Posterior cingulate gyrus (tissue), 11 donors: ENCODE measurements at regions of chr2 and their contacts with region 1.

Region 1: GRCh38 chr2:6896930-6897759 is 19.6 kb downstream of the RSAD2 start:
- DNase-seq: no peak

Region 2: GRCh38 chr2:6089474-6089873 is 807.7 kb before region 1 on chr2:
- intact Hi-C with region 1: no loop called
- DNase-seq: no peak

Region 3: DNA sequence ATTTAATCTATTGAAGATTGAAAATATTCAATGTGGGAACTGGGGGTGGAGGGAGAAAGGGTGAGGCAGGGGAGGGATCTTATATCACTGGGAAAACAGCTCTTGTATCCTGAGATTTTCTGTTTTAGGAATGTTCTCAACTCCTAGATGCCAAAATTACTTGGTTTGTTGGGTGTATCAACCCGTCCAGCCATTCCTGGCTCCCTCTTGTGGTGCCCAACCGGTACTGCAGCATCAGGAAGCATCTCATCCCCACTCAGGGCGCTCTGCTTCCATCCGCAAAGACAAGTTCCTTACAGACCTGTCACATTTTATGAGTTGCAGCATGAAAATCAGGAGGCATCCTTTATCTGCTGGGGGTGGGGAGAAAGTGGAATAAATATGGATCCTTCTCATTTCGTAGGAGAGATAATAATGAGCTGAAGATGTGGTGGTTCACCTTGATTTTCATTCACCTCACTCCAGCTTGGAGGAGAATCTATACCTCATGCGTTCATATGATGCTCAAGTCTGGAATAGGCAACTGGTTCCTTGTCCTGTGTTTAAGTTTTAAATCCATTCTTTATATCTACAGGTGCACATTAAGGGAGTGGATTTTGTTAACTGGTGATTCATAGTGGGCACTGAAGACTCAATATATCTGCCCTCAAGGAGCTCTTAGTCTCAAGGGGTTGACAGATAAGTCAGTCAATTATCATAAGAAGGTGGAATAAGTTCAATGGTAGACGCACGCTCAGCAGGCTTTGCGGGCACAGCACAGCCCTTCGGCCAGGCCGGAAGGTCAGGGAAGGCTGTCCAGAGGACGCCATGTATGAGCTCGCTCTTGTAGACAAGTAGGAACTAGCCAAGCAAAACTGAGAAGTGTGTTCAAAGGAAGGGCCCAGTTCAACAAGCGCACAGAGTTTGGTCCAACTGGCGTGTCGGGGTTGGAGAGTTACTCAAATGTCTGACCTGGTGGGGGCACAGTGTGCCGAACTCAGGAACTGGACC is 147.4 kb after region 1 on chr2:
- intact Hi-C with region 1: loop called (anchors 2 kb)
- DNase-seq: peak; percentile 54 to 96 (median 76)

Region 4: DNA sequence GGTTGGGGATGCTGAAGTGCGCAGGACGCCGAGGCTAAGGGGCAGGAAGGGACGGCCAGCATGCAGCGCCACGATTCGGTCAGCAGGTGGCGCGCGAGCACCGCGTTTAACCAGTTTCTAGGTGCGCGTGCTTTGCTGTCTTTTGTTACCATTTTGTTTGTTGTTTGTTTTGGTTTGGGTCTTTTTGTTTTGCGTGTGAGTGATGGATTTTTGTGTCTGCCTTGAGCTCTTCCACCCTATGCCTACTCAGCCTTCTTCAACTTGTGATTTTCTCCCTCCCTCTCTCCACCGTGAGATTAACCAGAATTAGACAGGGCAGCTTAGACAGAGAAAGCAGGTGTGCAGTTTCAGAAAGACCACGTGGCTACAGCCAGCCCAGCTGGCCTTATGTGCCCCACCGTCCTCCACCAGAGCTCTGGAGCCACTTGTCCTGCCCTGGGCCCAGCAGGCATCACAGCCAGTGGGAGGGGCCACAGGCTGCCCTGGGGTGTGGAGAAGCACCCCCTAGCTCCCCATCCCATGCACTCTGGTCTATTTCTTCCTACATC is 200.3 kb after region 1 on chr2:
- intact Hi-C with region 1: no loop called
- DNase-seq: peak; percentile 63 to 97 (median 80)